Psoas muscle (tissue), 8 donors: ENCODE measurements at regions of chr15 and their contacts with region 1.

Region 1: GRCh38 chr15:64067564-64068030 is 21.3 kb upstream of the DAPK2 start:
- DNase-seq: peak; percentile 46 to 68
- ATAC-seq: peak; percentile 55 to 65 (median 56)
- H3K4me3 ChIP-seq: peak overlapping the region; percentile 15
- H3K27ac ChIP-seq: no peak overlapping the region
- H3K4me1 ChIP-seq: peaks cover 29% of the 10 kb centered on the region
- H3K27me3 ChIP-seq: no peaks in the 10 kb centered on the region
- CTCF ChIP-seq: peak; percentile 82

Region 2: DNA sequence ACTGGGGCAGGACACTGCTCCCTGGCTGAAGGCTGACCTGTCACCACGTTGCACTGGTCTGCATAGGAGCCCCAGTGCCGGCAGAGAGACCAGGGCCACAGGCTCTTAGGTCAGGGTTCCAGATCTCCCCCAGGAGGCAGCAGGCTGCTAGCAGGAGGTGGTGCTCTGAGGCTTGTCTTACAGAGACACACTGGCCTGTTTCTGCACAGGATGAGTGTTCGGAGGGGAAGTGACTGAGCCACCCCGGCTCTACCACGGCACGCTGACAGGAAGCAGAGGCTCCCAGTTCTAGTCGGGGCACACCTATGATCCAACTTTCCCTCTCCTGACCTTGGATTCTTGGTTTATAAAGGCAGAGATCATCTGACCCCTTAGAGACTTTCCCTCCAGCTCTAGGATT is 461.8 kb before region 1 on chr15:
- intact Hi-C with region 1: loop called in 1 of 2 experiments (anchors 5 kb)
- DNase-seq: no peak
- ATAC-seq: no peak
- H3K4me3 ChIP-seq: no peak overlapping the region
- H3K27ac ChIP-seq: no peak overlapping the region
- H3K4me1 ChIP-seq: peaks cover 17% of the 10 kb centered on the region
- H3K27me3 ChIP-seq: no peaks in the 10 kb centered on the region
- CTCF ChIP-seq: no peak

Region 3: GRCh38 chr15:63826528-63826927 is 241.1 kb before region 1 on chr15:
- intact Hi-C with region 1: no loop called
- DNase-seq: no peak
- ATAC-seq: peak in 1 of 4 donors; percentile 28
- H3K4me3 ChIP-seq: no peak overlapping the region
- H3K27ac ChIP-seq: no peak overlapping the region
- H3K4me1 ChIP-seq: peaks cover 36% of the 10 kb centered on the region
- H3K27me3 ChIP-seq: no peaks in the 10 kb centered on the region
- CTCF ChIP-seq: peak; percentile 19

Region 4: DNA sequence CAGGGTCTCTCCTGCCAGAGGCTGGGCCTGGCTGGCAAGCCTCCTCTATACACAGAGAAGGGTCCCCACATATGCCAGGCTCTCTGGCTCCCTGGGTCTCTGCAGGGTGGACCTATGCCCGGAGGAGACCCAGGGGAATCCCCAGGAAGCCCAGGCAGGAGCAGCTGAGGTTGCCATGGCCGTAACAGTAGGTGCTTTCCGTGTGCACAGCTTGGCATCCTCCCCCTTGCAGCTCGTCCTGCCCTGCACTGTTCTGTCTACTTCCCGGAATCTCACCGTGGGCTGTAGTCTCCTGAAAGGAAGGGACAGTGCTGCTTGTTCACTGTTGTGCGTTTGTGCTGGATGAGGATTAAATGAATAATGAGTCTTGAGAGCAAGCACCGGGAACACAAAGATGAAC is 69.1 kb before region 1 on chr15:
- intact Hi-C with region 1: no loop called
- DNase-seq: no peak
- ATAC-seq: peak; percentile 7 to 46 (median 30)
- H3K4me3 ChIP-seq: no peak overlapping the region
- H3K27ac ChIP-seq: peak overlapping the region; percentile 42
- H3K4me1 ChIP-seq: peaks cover 57% of the 10 kb centered on the region
- H3K27me3 ChIP-seq: no peaks in the 10 kb centered on the region
- CTCF ChIP-seq: no peak

Region 5: GRCh38 chr15:64137226-64138220 is 69.9 kb after region 1 on chr15:
- intact Hi-C with region 1: no loop called
- DNase-seq: no peak
- ATAC-seq: peak; percentile 52 to 60 (median 54)
- H3K4me3 ChIP-seq: no peak overlapping the region
- H3K27ac ChIP-seq: no peak overlapping the region
- H3K4me1 ChIP-seq: no peaks in the 10 kb centered on the region
- H3K27me3 ChIP-seq: no peaks in the 10 kb centered on the region
- CTCF ChIP-seq: no peak